ENCODE measurements at regions of chr2 and their contacts with region 1.

Region 1: GRCh38 chr2:197453161-197453914 is at the start of gene COQ10B:
- DNase-seq: peak; percentile 100
- H3K4me3 ChIP-seq: peak within 1 kb of the TSS; percentile 72 to 99 (median 93)
- H3K27ac ChIP-seq: peak within 1 kb of the TSS; percentile 97 to 100 (median 99)
- H3K4me1 ChIP-seq: peaks cover 0 to 20% (median 18%) of the 10 kb centered on the region in 4 donors
- H3K27me3 ChIP-seq: no peaks in the 10 kb centered on the region
- CTCF ChIP-seq: peak in 1 of 4 experiments; percentile 10
- EP300 ChIP-seq: peak in 1 of 4 donors; percentile 41
- POLR2A ChIP-seq: peak; percentile 86 to 89
- total RNA-seq, gene COQ10B: 16.3 to 39.0 (median 33.0) TPM

Region 2: DNA sequence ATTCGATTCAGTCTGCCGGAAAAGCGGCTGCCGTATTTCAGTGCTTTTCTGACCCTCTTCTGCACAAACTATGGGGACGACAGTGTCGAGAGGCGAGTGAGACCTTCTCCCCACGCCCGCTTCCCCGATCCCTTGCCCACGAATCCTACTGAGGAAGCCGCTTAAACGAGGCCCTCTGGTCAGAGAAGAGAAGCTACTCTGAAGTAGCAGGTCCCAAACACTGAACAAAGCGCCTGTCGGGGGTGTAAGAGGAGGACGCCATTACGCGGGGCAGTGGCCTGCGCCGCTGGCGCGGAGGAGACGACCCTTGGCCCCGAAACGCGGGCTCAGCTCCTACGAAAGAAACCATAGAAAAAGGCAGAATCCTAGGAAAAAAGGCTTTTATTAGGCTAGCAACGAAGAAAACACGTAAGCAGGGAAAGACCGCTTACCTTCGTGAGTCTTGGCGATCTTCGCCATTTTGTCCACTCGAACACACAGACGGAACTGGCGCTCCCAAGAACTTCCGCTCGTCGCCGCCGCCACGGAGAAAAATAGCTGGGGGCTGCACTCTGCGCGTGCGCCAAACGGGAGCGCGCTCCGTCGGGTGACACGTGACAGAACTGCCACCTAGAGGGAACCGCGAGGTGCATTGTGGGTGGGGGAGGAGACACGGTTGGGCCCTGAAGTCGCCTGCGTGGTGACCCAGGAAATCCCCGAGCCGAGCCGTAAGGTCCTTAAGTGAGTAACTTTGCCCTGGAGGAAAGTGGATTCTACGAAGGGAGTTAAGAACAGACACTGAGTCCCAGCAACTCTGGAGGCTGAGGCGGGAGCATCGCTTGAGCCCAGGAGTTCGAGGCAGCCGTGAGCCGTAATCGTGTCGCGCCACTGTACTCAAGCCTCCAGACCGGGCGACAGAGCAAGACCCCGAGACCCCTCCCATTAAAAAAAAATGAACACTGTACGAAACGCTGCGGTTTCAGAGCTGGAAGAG is 18.5 kb before region 1 on chr2 and contains the start of gene SF3B1:
- intact Hi-C with region 1: loop called (anchors 1 kb)
- DNase-seq: peak; percentile 99
- H3K4me3 ChIP-seq: peak within 1 kb of the TSS; percentile 86 to 98 (median 92)
- H3K27ac ChIP-seq: peak within 1 kb of the TSS; percentile 91 to 98 (median 97)
- H3K4me1 ChIP-seq: peaks cover 0 to 50% (median 45%) of the 10 kb centered on the region in 4 donors
- H3K27me3 ChIP-seq: no peaks in the 10 kb centered on the region
- CTCF ChIP-seq: no peak
- EP300 ChIP-seq: peak in 1 of 4 donors; percentile 82
- POLR2A ChIP-seq: peak; percentile 90 to 93
- total RNA-seq, gene SF3B1: 258 to 475 (median 332) TPM

Region 3: GRCh38 chr2:197499594-197500526 is 46.5 kb after region 1 on chr2 and contains the starts of genes HSPD1 and HSPE1:
- intact Hi-C with region 1: loop called (anchors 2 kb)
- DNase-seq: peak; percentile 99
- H3K4me3 ChIP-seq: peak within 1 kb of the TSS; percentile 76 to 95 (median 84)
- H3K27ac ChIP-seq: peak within 1 kb of the TSS; percentile 95 to 96 (median 96)
- H3K4me1 ChIP-seq: peaks cover 0 to 55% (median 43%) of the 10 kb centered on the region in 4 donors
- H3K27me3 ChIP-seq: no peaks in the 10 kb centered on the region
- CTCF ChIP-seq: no peak
- EP300 ChIP-seq: peak; percentile 61 to 97 (median 74)
- POLR2A ChIP-seq: peak; percentile 86 to 92
- total RNA-seq, gene HSPD1: 98.9 to 144 (median 114) TPM
- total RNA-seq, gene HSPE1: 47.8 to 136 (median 106) TPM

Region 4: GRCh38 chr2:197705121-197705911 is 252.0 kb after region 1 on chr2 and contains the start of gene MARS2:
- intact Hi-C with region 1: loop called (anchors 10 kb)
- DNase-seq: peak; percentile 96
- H3K4me3 ChIP-seq: peak within 1 kb of the TSS; percentile 68 to 92 (median 76)
- H3K27ac ChIP-seq: peak within 1 kb of the TSS; percentile 77 to 87 (median 81)
- H3K4me1 ChIP-seq: peaks cover 0 to 40% (median 37%) of the 10 kb centered on the region in 4 donors
- H3K27me3 ChIP-seq: no peaks in the 10 kb centered on the region
- CTCF ChIP-seq: no peak
- EP300 ChIP-seq: no peak
- POLR2A ChIP-seq: peak; percentile 10 to 18
- total RNA-seq, gene MARS2: 3.1 to 6.6 (median 4.5) TPM